ENCODE measurements at regions of chr1 and their contacts with region 1.

Region 1: DNA sequence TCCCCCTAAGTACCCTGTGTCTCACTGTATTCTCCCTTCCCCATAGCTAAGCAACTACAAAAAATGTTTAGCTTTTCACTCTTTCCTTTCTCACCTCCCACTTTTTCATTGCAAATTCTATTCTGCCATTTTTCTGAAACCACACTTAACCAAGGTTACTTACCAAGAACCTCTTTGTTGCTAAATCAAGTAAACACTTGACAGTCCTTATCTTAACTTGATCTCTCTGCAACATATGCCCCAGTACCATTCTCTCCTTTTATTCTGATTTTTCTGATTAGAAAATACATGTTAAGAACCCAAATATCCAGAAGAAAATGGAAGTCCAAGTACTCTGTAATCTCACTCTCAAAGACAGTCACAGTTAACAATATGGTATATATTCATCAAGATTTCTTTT is 16.0 kb downstream of the EVI5 start:
- DNase-seq: no peak
- H3K4me3 ChIP-seq: no peak overlapping the region
- H3K27ac ChIP-seq: no peak overlapping the region
- H3K4me1 ChIP-seq: no peaks in the 10 kb centered on the region
- CTCF ChIP-seq: no peak

Region 2: GRCh38 chr1:92754000-92754718 is 14.8 kb before region 1 on chr1:
- CTCF ChIA-PET with region 1: interaction called, 3 read pairs
- POLR2A ChIA-PET with region 1: interaction called, 14 read pairs
- intact Hi-C with region 1: no loop called
- DNase-seq: no peak
- H3K4me3 ChIP-seq: no peak overlapping the region
- H3K27ac ChIP-seq: no peak overlapping the region
- H3K4me1 ChIP-seq: no peaks in the 10 kb centered on the region
- CTCF ChIP-seq: no peak

Measured in OCI-LY7 (cell line).